ENCODE measurements at regions of chr2 and their contacts with region 1.

Region 1: GRCh38 chr2:119759451-119760236 is at the start of gene PTPN4:
- DNase-seq: peak; percentile 90 to 98
- H3K4me3 ChIP-seq: peak within 1 kb of the TSS; percentile 75 to 92
- H3K27ac ChIP-seq: peak within 1 kb of the TSS; percentile 84 to 90
- H3K4me1 ChIP-seq: peaks cover 0 to 14% of the 10 kb centered on the region in 2 donors
- H3K27me3 ChIP-seq: no peaks in the 10 kb centered on the region
- CTCF ChIP-seq: no peak
- total RNA-seq, gene PTPN4: 35.9 TPM

Region 2: DNA sequence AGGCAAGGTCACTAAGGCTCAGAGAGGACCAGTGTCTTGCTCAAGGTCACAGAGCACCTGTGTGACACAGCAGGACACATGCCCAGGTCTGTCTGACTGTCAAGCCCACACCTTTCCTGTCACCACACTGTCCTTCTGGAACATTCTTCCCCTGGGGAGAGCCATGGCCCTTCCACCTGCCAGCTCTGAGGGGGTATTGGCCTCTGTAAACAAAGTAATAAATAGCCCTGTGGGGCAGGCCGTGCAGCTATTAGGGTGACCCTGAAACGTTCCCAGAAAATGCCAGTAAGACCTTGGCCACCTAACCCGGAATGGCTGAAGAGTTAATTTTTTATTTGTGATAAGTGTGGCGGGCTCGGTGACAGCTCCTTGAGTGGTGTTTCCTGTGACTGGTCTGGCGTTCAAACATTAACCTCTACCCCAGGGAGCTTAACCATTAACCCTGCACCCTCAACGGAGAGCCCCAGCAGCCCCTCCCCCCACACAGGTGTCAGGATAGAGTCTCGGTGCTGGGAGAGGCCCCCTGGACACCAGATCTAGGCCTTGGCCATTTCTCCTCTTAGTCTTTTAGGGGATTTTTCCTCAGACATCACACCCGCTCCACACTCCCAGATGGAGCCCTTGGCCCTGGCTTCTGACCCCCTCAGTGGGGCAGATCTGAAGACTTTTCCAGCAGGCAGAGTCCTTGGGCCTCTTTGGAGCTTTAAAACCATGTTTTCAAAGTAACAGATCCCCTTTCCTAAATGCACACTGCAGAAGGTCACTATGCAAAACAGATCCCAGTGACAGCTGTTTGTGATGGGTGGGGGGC is 272.0 kb before region 1 on chr2:
- intact Hi-C with region 1: loop called (anchors 10 kb)
- DNase-seq: peak in 1 of 2 donors; percentile 37
- H3K4me3 ChIP-seq: no peak overlapping the region
- H3K27ac ChIP-seq: peak overlapping the region in 1 of 2 donors; percentile 66
- H3K4me1 ChIP-seq: peaks cover 35 to 38% of the 10 kb centered on the region in 2 donors
- H3K27me3 ChIP-seq: no peaks in the 10 kb centered on the region
- CTCF ChIP-seq: no peak

Region 3: DNA sequence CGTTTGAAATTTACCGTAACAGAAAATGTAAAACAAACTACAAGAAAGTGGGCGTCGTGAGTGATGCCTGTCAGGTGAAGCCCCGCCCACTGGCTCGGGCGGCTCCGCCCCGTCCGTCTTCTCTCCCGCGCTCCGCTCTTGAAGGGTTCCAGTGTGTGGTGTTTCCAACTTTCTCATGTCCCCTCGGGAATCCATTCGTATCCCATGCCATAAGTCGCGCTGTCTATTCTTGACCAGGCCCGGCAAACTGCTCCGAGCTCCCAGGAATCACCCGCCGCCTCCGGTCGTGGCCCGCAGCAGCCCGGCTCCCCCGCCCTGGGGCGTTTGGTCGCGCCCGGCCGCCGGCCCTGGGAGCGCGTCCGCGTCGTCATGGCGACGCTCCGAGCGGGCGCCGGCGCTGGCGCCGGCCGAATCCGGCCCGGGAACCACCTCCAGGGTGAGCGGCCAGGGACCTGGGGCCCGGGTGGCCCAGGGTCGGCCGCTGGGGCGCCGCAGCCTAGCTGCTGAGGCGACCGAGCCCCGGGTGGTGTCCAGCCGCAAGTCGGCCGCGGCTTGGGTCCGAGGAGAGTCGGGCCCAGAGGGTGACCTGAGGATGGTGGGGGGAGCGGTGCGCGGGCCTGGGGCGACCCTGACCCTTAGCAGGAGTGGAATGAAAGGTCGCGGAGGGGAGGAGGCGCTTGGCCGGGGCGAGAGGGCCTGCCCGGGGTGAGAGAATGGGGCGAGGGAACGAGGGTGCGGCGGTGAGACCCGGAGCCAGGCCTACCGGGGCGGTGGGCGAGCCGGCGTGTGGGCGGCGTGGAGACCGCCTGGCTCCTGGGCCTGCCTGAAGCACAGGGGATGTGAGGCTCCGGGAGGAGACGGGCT is 215.3 kb before region 1 on chr2 and contains the start of gene CFAP221:
- intact Hi-C with region 1: loop called (anchors 5 kb)
- DNase-seq: peak in 1 of 2 donors; percentile 72
- H3K4me3 ChIP-seq: peak within 1 kb of the TSS; percentile 74 to 81
- H3K27ac ChIP-seq: peak within 1 kb of the TSS; percentile 17 to 62
- H3K4me1 ChIP-seq: peaks cover 0 to 4% of the 10 kb centered on the region in 2 donors
- H3K27me3 ChIP-seq: no peaks in the 10 kb centered on the region
- CTCF ChIP-seq: no peak
- total RNA-seq, gene CFAP221: not detected

Region 4: DNA sequence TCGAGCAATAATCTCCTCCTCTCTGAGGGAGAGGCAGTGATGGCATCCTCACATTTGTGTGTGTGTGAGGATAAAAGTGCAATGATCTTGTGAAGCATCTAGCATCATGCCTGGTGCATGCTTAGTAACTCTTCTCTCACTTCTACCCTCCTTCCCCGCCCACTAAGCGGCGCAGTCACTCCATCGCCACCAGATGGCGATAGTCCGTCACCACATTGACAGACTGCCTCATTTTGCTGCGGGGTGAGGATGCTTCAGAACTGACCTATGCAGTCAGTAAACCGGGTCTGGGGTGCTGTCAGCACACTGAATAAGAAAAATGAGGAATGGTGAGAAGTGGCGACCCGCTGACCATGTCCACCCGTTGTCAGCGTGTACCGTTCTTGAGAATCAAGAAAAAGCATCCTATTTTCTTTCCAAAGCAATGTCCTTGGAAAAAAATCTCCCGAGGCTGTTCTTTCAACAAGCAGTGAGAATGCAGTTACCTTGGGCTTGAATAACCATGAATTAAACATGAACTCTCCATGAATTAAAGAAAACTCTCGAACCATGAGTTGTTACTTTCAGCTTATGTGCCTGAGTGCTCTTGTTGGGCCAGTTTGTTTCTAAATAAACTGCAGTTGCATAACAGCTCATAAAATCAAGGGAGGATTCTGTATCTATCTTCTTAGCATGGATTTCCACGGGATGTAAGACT is 117.9 kb before region 1 on chr2:
- intact Hi-C with region 1: loop called (anchors 2 kb)
- DNase-seq: peak in 1 of 2 donors; percentile 81
- H3K4me3 ChIP-seq: peak overlapping the region in 1 of 2 donors; percentile 9
- H3K27ac ChIP-seq: no peak overlapping the region
- H3K4me1 ChIP-seq: peaks cover 0 to 8% of the 10 kb centered on the region in 2 donors
- H3K27me3 ChIP-seq: no peaks in the 10 kb centered on the region
- CTCF ChIP-seq: peak; percentile 66 to 96 (median 91)

Region 5: GRCh38 chr2:119678998-119679710 is 80.5 kb before region 1 on chr2 and contains the start of gene TMEM177:
- intact Hi-C with region 1: loop called (anchors 5 kb)
- DNase-seq: peak; percentile 23 to 89
- H3K4me3 ChIP-seq: peak within 1 kb of the TSS; percentile 74 to 97
- H3K27ac ChIP-seq: peak within 1 kb of the TSS in 1 of 2 donors; percentile 54
- H3K4me1 ChIP-seq: peaks cover 4 to 7% of the 10 kb centered on the region in 2 donors
- H3K27me3 ChIP-seq: no peaks in the 10 kb centered on the region
- CTCF ChIP-seq: no peak
- total RNA-seq, gene TMEM177: not detected

Region 6: DNA sequence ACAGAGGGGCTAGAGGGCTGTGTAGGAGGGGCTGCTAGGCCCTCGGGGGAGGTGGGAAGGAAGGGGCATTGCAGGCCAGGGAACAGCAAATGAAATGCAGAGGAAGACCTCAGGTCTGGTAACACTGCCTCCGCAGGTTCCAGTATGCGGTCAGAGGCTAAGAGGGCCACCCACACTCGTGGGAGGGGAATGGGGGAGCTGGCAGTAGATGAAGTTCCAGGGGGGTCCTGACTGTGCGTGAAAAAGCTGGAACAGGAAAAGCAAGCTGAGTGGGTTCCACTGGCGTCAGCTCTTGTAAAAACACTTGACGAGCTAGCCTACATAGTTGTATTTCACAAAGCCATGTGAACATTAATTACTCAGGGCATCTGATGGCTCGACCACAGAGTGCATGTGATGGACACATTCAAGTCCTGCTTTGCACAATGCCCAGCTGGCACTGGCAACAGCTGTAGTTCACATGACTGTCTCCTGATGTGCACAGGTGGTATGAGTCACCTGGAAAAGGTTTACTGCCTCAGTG is 28.9 kb before region 1 on chr2:
- intact Hi-C with region 1: no loop called
- DNase-seq: no peak
- H3K4me3 ChIP-seq: no peak overlapping the region
- H3K27ac ChIP-seq: no peak overlapping the region
- H3K4me1 ChIP-seq: no peaks in the 10 kb centered on the region
- H3K27me3 ChIP-seq: no peaks in the 10 kb centered on the region
- CTCF ChIP-seq: no peak

Region 7: DNA sequence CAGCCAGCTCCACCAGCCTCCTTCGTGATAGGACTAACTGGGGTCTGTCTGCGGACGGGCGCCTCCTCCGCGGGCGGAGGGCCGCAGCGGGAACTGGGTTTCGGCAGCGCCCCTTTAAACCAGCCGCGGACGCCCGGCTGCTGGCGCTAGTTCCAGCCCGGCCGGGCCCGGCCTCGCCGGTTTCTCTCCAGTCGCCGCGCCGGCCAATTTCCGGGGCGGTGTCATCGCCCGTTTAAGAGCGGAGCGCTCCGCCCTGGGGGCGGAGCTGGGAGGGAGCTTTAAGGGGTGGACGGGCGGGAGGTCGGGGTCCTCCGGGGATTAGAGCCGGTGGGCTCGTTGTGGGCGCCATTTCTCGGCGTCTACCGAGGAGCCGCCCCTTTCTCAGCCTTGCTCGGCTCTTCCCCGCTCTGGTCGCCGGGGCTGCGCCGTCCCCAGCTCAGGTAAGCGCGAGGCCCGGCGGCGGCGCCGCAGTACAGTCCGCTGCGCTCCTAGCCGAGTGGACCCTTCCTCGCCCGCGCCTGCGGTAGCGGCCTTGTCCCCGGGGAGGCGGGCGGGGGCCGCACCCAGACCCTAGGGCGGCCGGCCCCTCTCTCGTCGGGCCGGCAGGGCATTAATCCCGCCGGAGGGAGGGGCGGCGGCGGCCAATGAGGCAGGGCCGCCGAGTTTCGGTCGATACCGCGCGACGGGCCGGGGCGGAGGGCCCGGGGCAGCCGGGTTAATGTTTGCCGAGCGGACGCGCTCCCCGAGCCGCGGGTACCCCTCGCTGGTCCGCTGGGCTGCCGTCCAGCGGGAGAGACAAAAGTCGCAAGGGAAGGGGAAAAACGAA is 253.3 kb after region 1 on chr2 and contains the start of gene EPB41L5:
- intact Hi-C with region 1: loop called (anchors 2 kb)
- DNase-seq: peak; percentile 41 to 93
- H3K4me3 ChIP-seq: peak within 1 kb of the TSS; percentile 79 to 97
- H3K27ac ChIP-seq: peak within 1 kb of the TSS; percentile 88 to 91
- H3K4me1 ChIP-seq: no peaks in the 10 kb centered on the region
- H3K27me3 ChIP-seq: no peaks in the 10 kb centered on the region
- CTCF ChIP-seq: no peak
- total RNA-seq, gene EPB41L5: 11.7 TPM

Region 8: DNA sequence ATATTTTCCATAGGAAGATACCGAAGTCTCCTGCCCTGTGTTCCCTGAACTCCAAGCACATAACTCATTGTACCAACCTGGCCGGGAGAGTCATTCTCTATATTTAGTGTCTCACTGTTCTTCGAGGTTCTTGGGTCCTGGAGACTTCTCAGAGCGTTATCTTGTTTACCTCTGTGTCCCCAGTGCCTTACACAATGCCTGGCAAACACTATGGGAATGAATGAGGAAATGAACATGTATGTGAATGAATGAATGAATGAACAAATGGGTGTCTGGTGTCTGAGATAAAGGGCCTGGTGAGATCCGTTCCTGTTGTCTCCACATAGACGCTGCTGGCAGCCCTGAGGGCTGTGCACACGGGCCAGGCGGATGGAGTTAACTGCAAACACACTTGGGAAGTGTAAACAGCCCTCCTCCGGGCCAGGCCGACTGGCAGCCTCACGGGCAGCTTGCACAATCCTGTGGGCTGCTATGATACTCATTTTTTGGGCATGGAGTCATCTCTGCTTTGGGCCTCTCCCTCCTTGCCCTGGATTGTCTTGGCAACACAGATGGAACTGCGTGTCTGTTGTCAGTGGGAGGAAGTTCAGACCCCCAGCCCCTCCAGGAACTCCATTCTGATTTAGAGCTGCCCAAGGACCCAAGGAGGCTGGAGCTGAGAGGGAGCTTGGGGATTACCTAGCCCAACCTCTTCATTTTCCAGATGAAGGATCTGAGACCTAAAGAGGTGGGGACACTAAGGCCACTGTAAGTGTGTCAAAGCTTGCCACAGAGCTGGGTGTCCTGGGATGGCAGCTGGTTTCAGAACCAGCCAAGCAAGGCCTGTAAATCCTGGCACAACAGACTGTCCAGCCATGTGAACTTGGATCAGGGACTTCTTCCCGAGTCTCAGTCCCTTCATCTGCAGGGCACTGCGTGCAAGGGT is 710.7 kb after region 1 on chr2:
- intact Hi-C with region 1: loop called (anchors 2 kb)
- DNase-seq: peak; percentile 66 to 96
- H3K4me3 ChIP-seq: no peak overlapping the region
- H3K27ac ChIP-seq: peak overlapping the region; percentile 85 to 91
- H3K4me1 ChIP-seq: peaks cover 20 to 38% of the 10 kb centered on the region in 2 donors
- H3K27me3 ChIP-seq: no peaks in the 10 kb centered on the region
- CTCF ChIP-seq: no peak